Activated naive CD4-positive, alpha-beta T cell treated with anti-CD3 and anti-CD28 coated beads for 36 hours (primary cell): ENCODE measurements at regions of chr11 and their contacts with region 1.

Region 1: DNA sequence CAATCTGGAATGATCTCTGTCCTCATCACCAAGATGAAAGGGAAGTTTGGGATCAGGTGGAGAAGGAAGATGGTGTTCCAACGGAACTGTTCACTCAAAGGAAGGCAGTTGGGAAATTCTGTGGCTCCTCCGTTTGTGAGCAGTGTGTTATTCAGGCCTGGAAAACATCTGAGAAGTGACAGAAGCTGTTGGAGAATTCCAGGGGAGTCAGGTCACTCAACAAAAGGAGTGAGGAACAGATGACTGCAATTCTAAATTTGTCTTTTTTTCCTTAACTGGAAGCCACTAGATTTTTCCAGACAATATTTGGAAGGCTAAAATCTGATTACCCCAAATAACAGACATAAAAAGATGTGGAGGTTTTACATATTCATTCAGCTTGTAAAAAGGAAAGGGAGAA is 107.8 kb downstream of the CD44 start:
- DNase-seq: no peak
- H3K4me3 Mint-ChIP-seq: no peak overlapping the region
- H3K27ac Mint-ChIP-seq: no peak overlapping the region
- H3K4me1 Mint-ChIP-seq: peaks cover 66% of the 10 kb centered on the region
- H3K27me3 Mint-ChIP-seq: no peaks in the 10 kb centered on the region

Region 2: GRCh38 chr11:35272391-35272902 is 25.7 kb after region 1 on chr11:
- CTCF ChIA-PET with region 1: interaction called, 3 read pairs
- intact Hi-C with region 1: loop called (anchors 1 kb)
- DNase-seq: peak; percentile 70
- H3K4me3 Mint-ChIP-seq: peak overlapping the region; percentile 17
- H3K27ac Mint-ChIP-seq: peak overlapping the region; percentile 63
- H3K4me1 Mint-ChIP-seq: peaks cover 48% of the 10 kb centered on the region
- H3K27me3 Mint-ChIP-seq: no peaks in the 10 kb centered on the region